ENCODE measurements at regions of chr4 and their contacts with region 1.

Region 1: DNA sequence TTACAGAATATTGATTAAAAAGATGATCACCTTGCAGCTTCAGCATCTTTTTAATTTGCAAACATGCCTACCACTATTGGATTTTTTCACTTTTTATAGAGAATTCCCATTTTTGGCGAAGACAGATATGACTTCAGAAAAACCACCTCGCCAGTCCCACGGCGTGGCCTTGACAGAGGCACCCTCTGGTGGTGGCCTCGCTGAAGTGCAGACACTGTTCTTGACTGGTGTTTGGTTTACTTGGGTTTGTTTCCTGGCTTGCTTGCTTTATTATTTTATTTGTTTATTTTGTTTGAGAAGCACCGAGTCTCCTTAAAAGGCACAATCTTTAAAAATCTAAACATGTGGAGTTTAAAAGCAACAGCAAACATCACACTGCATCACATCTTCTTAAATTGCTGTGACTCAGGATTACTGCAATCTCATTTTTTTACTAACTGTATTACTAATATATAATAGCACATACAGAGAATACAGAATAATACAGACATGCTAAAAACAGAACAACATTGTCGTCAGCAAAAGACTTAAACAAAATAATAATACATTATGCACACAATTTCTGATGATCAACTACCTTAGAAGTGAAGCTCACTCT is 13.1 kb upstream of the AMTN start:
- DNase-seq: peak; percentile 13 to 58
- ATAC-seq: peak in 2 of 4 donors; percentile 57 to 58
- H3K4me3 ChIP-seq: no peak overlapping the region
- H3K27ac ChIP-seq: no peak overlapping the region
- H3K4me1 ChIP-seq: no peaks in the 10 kb centered on the region
- H3K27me3 ChIP-seq: no peaks in the 10 kb centered on the region
- CTCF ChIP-seq: peak; percentile 66

Region 2: GRCh38 chr4:69697536-69698242 is 807.6 kb before region 1 on chr4:
- intact Hi-C with region 1: loop called in 1 of 2 experiments (anchors 10 kb)
- DNase-seq: no peak
- ATAC-seq: no peak
- H3K4me3 ChIP-seq: no peak overlapping the region
- H3K27ac ChIP-seq: no peak overlapping the region
- H3K4me1 ChIP-seq: no peaks in the 10 kb centered on the region
- H3K27me3 ChIP-seq: no peaks in the 10 kb centered on the region
- CTCF ChIP-seq: no peak